HEK293T (cell line): ENCODE measurements at regions of chr2 and their contacts with region 1.

Region 1: GRCh38 chr2:162221064-162221463 is 22.2 kb downstream of the FAP start:
- DNase-seq: peak; percentile 77

Region 2: GRCh38 chr2:162297925-162298552 is 77.0 kb after region 1 on chr2:
- CTCF ChIA-PET with region 1: interaction called, 29 read pairs
- POLR2A ChIA-PET with region 1: no interaction called
- DNase-seq: peak; percentile 35